ENCODE measurements at regions of chr1 and their contacts with region 1.

Region 1: DNA sequence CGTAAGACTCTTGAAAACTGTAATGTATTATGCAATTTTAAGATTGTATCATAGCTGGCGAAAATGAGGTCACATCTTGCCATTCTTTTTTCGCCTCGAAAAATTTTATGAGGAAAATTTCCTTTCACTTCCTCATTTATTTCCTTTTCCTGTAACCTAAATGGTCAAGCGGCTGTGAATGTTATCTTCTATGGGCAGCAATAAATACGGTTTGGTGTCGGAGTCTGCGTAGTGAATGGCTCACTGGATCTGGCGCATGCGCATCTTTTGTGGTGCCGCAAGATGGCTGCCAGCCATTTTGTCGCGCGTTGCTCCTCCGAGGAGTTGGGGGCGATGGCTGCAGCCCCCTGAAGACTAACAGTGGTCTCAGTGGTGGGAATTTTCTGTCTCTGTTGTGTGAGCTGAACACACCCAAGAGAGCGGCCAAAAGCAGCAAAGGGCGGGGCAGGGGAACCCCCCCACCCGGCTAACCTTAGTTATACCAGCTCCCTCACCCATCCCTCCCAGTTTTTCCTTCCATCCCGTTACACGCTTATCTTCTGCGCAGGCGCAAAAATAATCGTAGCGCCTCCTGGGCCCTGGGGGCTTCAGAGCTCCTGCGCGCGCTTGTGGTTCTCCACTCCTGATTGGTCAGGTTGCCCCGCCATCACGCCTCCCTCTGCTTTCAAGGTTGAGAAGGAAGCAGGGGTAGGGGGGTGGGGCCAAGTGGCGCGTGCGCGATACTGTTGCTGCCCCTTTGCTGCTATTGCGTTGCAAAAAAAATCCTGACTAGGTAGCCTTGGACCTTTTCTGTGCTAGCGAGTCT is at the start of gene RPRD2:
- DNase-seq: peak; percentile 99
- total RNA-seq, gene RPRD2: 23.5 TPM

Region 2: GRCh38 chr1:150281837-150282653 is 81.6 kb before region 1 on chr1 and contains the start of gene CIART:
- intact Hi-C with region 1: loop called (anchors 5 kb)
- DNase-seq: peak; percentile 95
- total RNA-seq, gene CIART: 10.0 TPM

Region 3: GRCh38 chr1:150321826-150322166 is 41.8 kb before region 1 on chr1:
- intact Hi-C with region 1: loop called (anchors 5 kb)
- DNase-seq: no peak

Region 4: GRCh38 chr1:150552093-150552691 is 188.6 kb after region 1 on chr1:
- intact Hi-C with region 1: loop called (anchors 10 kb)
- DNase-seq: peak; percentile 93

Region 5: GRCh38 chr1:150613061-150613920 is 249.7 kb after region 1 on chr1:
- intact Hi-C with region 1: loop called (anchors 10 kb)
- DNase-seq: no peak

Measured in cardiac septum (tissue), 1 donor.